SK-N-SH (cell line): ENCODE measurements at regions of chr6 and their contacts with region 1.

Region 1: DNA sequence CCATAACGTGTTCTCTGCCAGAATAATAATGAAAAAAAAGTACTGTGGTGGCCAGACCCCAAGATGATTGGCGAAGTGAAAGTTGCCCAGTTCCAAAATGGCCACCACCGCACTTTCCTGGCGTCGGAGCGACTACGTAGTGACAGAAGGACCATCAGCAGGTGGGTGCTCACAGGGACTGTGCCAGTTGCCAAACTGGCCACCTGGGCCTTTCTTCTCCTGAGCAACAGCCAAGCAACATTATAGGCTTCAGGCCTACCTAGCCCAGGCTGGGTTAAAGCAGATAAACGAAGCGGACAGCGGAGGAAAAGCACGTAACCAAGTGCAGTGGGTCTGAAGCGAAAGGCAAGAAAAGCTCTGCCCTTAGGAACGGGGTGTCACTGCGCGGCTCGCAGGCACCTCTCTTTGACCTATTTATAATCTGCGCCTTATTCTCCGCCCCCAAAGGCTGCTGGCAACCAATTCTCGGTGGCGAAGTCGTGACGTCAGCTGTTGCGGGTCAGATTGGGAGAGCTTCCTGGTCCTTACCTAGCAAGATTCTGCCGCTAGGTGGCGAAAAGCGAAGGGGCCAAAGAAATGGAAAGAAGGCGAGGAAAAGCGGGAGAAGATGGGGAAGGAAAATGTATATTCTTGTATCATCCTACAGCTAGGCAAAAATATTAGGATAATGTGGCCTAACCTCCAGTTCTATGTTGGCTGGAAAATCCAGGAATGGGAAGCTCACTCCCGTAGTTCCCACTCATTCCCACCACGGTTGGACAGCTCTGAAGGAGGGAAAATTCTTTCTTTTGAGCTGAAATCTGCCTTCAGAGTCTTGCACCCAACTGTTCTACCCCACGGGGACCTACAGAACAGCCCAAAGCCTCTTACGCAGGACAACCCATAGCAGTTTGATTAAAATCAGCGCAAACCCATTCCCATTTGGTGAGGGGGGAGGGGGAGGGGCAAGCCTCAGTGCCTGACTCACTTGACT is 6.9 kb upstream of the MOG start:
- DNase-seq: peak; percentile 89
- H3K4me3 ChIP-seq: peak overlapping the region; percentile 40 to 52
- H3K27ac ChIP-seq: peak overlapping the region; percentile 17 to 69; a peak in 3 of 4 replicates
- H3K4me1 ChIP-seq: peaks cover 0 to 7% of the 10 kb centered on the region in 2 experiments; a peak in 1 of 4 replicates
- H3K27me3 ChIP-seq: peaks cover 7% of the 10 kb centered on the region; the same call in 1 of the 2 replicates
- CTCF ChIP-seq: peak; percentile 89
- EP300 ChIP-seq: no peak
- RAD21 ChIP-seq: no peak

Region 2: DNA sequence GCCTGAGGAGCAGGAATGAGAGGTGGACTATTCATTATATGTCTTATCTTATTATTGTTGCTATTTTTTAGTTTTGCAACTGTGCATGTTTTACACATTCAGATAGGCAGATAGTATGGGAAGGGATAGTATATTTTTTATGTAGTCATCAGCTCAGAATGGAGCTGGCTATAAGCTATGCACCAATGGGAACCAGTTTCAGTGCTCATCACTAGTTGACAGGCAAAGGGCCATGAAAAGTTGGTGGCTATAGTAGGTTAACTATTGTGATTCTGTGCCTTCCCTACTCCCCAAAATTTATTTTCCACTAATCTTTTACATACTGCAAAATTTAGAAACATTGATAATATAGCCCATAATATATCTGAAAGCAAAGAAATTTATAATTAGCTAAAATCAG is 85.1 kb before region 1 on chr6:
- CTCF ChIA-PET with region 1: no interaction called
- POLR2A ChIA-PET with region 1: no interaction called
- DNase-seq: no peak
- H3K4me3 ChIP-seq: no peak overlapping the region
- H3K27ac ChIP-seq: no peak overlapping the region
- H3K4me1 ChIP-seq: no peaks in the 10 kb centered on the region
- H3K27me3 ChIP-seq: peaks cover 44% of the 10 kb centered on the region; the same call in 1 of the 2 replicates
- CTCF ChIP-seq: no peak
- EP300 ChIP-seq: no peak
- RAD21 ChIP-seq: no peak

Region 3: GRCh38 chr6:29602564-29603361 is 47.2 kb before region 1 on chr6:
- CTCF ChIA-PET with region 1: interaction called, 13 read pairs
- POLR2A ChIA-PET with region 1: no interaction called
- DNase-seq: peak; percentile 69
- H3K4me3 ChIP-seq: no peak overlapping the region
- H3K27ac ChIP-seq: no peak overlapping the region
- H3K4me1 ChIP-seq: peaks cover 0 to 8% of the 10 kb centered on the region in 2 experiments; a peak in 1 of 4 replicates
- H3K27me3 ChIP-seq: no peaks in the 10 kb centered on the region
- CTCF ChIP-seq: peak; percentile 43; the same call in 1 of the 2 replicates
- EP300 ChIP-seq: no peak
- RAD21 ChIP-seq: no peak

Region 4: GRCh38 chr6:29632789-29633533 is 17.0 kb before region 1 on chr6 and contains the start of gene GABBR1:
- CTCF ChIA-PET with region 1: interaction called, 106 read pairs
- POLR2A ChIA-PET with region 1: interaction called, 12 read pairs
- DNase-seq: peak; percentile 99
- H3K4me3 ChIP-seq: peak within 1 kb of the TSS; percentile 62 to 90
- H3K27ac ChIP-seq: peak within 1 kb of the TSS; percentile 33 to 71; a peak in 3 of 4 replicates
- H3K4me1 ChIP-seq: peaks cover 16 to 17% of the 10 kb centered on the region in 2 experiments; a peak in 2 of 4 replicates
- H3K27me3 ChIP-seq: no peaks in the 10 kb centered on the region
- CTCF ChIP-seq: no peak
- EP300 ChIP-seq: no peak
- RAD21 ChIP-seq: no peak
- polyA plus RNA-seq, gene GABBR1: 26.8 and 33.8 TPM in 2 replicates

Region 5: DNA sequence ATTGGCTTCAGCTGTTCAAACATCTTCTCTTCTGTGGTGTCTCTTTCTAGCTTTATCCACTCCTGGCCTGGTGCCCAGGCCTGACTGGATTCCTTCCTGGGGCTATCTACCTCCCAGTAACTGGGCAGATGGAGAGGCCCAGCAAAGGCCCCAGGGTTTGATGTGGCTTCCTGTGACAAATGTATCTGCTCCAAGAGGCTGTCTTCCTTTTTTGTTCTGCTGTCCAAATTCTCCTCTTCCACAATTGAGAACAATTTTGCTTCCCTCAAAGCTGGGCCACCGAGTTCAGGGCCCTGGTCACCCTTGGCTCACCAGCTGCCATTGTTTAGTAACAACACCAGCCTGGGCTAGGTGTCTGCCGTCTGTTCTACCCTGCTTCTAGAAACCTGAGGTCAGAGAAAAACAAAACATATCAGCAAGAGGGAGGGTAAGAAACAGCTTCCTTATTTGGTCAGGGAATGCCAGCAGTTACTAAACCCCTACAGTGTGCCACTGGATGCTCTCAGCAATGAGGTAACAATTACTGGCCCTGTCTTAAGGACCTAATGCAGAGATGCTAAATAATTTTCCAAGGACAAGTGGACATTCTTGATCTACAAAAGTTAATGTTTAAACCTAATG is 27.1 kb after region 1 on chr6:
- CTCF ChIA-PET with region 1: interaction called, 78 read pairs
- POLR2A ChIA-PET with region 1: no interaction called
- DNase-seq: no peak
- H3K4me3 ChIP-seq: no peak overlapping the region
- H3K27ac ChIP-seq: no peak overlapping the region
- H3K4me1 ChIP-seq: no peaks in the 10 kb centered on the region
- H3K27me3 ChIP-seq: no peaks in the 10 kb centered on the region; the same call in 1 of the 2 replicates
- CTCF ChIP-seq: no peak
- EP300 ChIP-seq: no peak
- RAD21 ChIP-seq: no peak